ENCODE measurements at regions of chr11 and their contacts with region 1.

Region 1: DNA sequence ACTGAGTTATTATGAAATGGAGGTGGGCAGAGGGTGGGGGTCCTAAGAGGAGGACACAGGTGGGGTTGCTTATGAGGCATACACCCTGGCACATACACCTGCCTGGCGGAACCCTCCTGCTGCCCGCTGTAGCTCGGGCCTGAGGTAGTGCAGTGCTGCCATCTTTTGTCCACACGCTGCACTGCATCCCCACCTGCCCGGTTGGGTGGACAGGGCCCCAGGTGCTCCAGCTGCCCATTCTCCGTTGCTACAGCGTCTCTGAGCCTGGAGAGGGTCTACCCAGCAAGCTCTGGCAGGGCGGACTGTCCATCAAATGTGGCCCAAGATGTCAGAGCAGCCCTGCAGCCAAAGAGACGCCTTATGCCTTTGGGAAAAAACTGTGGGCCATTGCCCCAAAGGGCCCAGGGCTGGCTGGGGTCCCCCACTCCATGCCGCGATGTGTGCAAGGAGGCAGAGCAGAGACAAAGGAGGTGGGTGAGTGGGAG is 131.2 kb downstream of the BUD13 start:
- DNase-seq: peak; percentile 85
- ATAC-seq: peak; percentile 93
- H3K4me3 Mint-ChIP-seq: no peak overlapping the region
- H3K27ac Mint-ChIP-seq: no peak overlapping the region
- H3K4me1 Mint-ChIP-seq: peaks cover 6% of the 10 kb centered on the region
- H3K27me3 Mint-ChIP-seq: no peaks in the 10 kb centered on the region; the same call in 1 of the 2 replicates
- CTCF ChIP-seq: peak; percentile 80

Region 2: DNA sequence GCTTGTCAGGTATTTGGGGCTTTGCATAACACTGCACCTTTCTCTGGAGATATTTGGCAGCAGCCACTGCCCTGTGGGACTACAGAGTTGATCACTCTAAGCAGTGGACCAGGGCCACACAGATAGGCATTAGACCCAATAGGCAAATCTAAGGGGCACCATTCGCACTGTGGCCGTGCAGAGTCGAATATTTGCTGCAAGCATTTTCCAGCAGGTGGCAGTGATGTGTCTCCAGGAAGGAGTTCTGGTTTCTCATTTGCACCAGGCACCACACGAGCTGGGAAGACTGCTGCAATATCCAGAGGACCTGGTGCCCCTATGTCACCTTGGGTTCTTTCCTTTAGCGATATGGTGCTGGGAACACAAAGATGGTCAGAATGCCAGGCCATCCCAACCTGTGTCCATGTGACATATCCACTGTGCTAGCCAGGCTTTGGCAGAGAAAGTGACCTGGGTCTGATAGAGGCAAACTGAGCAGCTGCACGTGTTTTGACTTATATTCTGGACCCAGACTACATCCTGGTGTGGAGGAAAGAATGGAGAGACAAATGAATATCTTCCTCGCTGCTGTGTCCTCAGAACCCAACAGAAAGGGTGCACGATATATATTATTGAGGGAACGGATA is 187.5 kb before region 1 on chr11:
- CTCF ChIA-PET with region 1: interaction called, 21 read pairs
- POLR2A ChIA-PET with region 1: no interaction called
- DNase-seq: peak; percentile 76
- ATAC-seq: peak; percentile 79
- H3K4me3 Mint-ChIP-seq: no peak overlapping the region
- H3K27ac Mint-ChIP-seq: no peak overlapping the region
- H3K4me1 Mint-ChIP-seq: peaks cover 51% of the 10 kb centered on the region
- H3K27me3 Mint-ChIP-seq: peaks cover 14% of the 10 kb centered on the region
- CTCF ChIP-seq: no peak; the same call in 1 of the 2 replicates

Region 3: GRCh38 chr11:116553482-116553881 is 88.1 kb before region 1 on chr11:
- CTCF ChIA-PET with region 1: interaction called, 14 read pairs
- POLR2A ChIA-PET with region 1: no interaction called
- DNase-seq: no peak
- ATAC-seq: peak; percentile 55; the same call in 1 of the 2 replicates
- H3K4me3 Mint-ChIP-seq: no peak overlapping the region
- H3K27ac Mint-ChIP-seq: no peak overlapping the region
- H3K4me1 Mint-ChIP-seq: no peaks in the 10 kb centered on the region
- H3K27me3 Mint-ChIP-seq: peaks cover 12% of the 10 kb centered on the region
- CTCF ChIP-seq: no peak

Region 4: GRCh38 chr11:116579031-116579653 is 62.5 kb before region 1 on chr11:
- CTCF ChIA-PET with region 1: interaction called, 16 read pairs
- POLR2A ChIA-PET with region 1: no interaction called
- DNase-seq: peak; percentile 41
- ATAC-seq: peak; percentile 12
- H3K4me3 Mint-ChIP-seq: peak overlapping the region; percentile 64
- H3K27ac Mint-ChIP-seq: no peak overlapping the region
- H3K4me1 Mint-ChIP-seq: peaks cover 32% of the 10 kb centered on the region
- H3K27me3 Mint-ChIP-seq: peaks cover 78% of the 10 kb centered on the region
- CTCF ChIP-seq: no peak

Region 5: GRCh38 chr11:116732271-116733042 is 90.9 kb after region 1 on chr11:
- CTCF ChIA-PET with region 1: interaction called, 22 read pairs
- POLR2A ChIA-PET with region 1: no interaction called
- DNase-seq: peak; percentile 85
- ATAC-seq: peak; percentile 88
- H3K4me3 Mint-ChIP-seq: peak overlapping the region; percentile 64
- H3K27ac Mint-ChIP-seq: peak overlapping the region; percentile 50; the same call in 1 of the 2 replicates
- H3K4me1 Mint-ChIP-seq: peaks cover 36% of the 10 kb centered on the region
- H3K27me3 Mint-ChIP-seq: no peaks in the 10 kb centered on the region
- CTCF ChIP-seq: peak; percentile 85

Region 6: DNA sequence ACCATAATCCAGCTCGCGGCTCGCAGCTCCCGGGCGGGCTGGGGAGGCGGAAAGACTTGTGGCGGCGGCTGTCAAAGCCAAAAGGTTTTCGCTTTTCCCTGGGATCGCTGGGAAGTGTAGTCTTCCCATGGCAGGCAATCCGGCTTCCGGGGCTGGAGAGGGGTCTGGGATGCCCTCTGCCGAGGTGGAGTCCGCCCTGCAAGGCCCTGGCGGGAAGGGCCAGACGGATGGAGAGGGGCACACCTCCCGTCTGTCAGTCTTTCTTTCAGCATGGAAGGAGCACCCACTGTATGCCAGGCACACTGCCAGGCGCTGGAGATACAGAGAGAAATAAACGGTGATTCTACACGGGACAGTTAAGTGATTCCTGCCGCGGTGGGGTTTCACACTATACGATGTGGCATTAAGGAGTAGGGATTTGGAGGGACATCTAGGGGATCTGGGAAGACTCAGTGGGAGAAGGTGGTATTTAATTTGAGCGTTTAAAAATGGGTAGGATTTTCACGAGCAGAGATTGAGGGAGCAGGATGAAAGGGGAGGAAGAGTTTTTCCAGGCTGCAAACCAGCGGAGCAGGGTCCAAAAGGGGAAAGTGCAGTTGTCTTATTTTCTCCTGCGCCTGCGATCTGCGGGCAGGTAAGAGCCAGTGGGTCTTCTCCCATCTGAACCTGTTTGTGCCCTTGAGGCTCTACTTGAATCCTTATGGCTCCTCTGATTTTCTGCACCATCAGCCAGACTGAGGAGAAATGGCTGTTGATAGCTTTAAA is 674.8 kb after region 1 on chr11 and contains the start of gene BACE1:
- CTCF ChIA-PET with region 1: no interaction called
- POLR2A ChIA-PET with region 1: no interaction called
- DNase-seq: peak; percentile 91
- ATAC-seq: peak; percentile 99
- H3K4me3 Mint-ChIP-seq: peak within 1 kb of the TSS; percentile 71
- H3K27ac Mint-ChIP-seq: no peak within 1 kb of the TSS; the same call in 1 of the 2 replicates
- H3K4me1 Mint-ChIP-seq: peaks cover 17% of the 10 kb centered on the region
- H3K27me3 Mint-ChIP-seq: peaks cover 2% of the 10 kb centered on the region
- CTCF ChIP-seq: no peak
- total RNA-seq, gene BACE1: 8.5 to 9.2 TPM (median 8.7 TPM) in 3 replicates

Measured in WTC11 (cell line).